IMR-90 (cell line): ENCODE measurements at regions of chrX and their contacts with region 1.

Region 1: GRCh38 chrX:102863735-102864134 is 73.3 kb upstream of the RAB40AL start:
- DNase-seq: peak; percentile 74
- ATAC-seq: peak; percentile 100
- H3K4me3 ChIP-seq: no peak overlapping the region
- H3K27ac ChIP-seq: no peak overlapping the region
- H3K4me1 ChIP-seq: no peaks in the 10 kb centered on the region
- H3K27me3 ChIP-seq: no peaks in the 10 kb centered on the region
- CTCF ChIP-seq: peak; percentile 85
- POLR2A ChIP-seq: no peak
- RAD21 ChIP-seq: peak; percentile 83

Region 2: GRCh38 chrX:102129473-102129872 is 734.3 kb before region 1 on chrX:
- CTCF ChIA-PET with region 1: no interaction called
- POLR2A ChIA-PET with region 1: no interaction called
- dilution Hi-C with region 1: no loop called
- in situ Hi-C with region 1: no loop called
- intact Hi-C with region 1: loop called (anchors 1 kb)
- DNase-seq: peak; percentile 4
- ATAC-seq: no peak; the same call in 1 of the 2 replicates
- H3K4me3 ChIP-seq: no peak overlapping the region
- H3K27ac ChIP-seq: no peak overlapping the region
- H3K4me1 ChIP-seq: no peaks in the 10 kb centered on the region
- H3K27me3 ChIP-seq: peaks cover 5% of the 10 kb centered on the region
- CTCF ChIP-seq: peak; percentile 43
- POLR2A ChIP-seq: no peak
- RAD21 ChIP-seq: 0 out of 2 replicates have a peak, but pooled peaks have one; percentile 16

Region 3: DNA sequence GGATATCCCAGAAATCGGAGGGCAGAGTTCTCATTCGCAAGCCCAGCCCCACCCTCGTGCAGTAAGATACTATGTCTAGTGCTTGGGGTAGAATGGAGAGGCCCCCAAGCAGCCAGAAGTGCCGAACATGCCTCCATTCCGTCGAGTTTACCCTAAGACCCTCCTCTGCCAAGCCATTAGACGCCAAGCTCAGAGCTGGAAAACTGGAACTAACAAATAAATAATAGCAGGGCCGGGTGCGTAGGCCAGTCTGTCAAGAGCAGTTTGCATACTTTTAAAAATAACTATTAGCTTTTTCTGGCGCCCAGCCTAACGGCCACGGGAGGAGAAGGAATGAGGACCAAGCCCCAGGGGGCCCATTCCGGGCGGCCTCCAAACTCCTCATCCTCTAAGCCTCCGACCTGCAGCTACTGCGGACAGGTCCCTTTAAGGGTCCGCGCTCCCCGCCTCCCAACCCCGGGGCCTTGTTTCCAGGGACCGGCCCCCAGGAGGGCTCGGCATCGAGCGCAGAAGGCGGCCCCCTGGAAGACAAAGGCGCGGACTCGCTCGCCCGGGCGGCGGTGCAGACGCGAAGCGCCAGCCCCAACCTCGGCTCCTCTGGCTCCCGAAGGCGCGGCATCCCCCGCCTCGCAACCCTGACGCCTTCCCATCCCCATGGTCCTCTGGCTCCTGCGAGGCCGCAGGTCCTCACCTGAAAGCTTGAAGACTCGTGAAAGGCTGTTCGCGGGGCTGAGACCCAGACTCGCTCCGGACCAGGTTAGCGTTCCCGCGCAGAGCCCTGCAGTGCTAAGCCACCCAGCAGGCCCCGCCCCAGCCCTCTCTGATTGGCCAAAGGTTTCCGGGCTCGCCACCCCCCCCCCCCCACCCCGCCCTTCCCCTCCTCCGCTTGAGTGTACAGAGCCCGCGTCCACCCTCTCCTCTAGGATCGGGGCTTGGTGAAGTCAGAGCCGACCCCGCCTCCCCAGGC is 347.5 kb before region 1 on chrX and contains the start of gene TMSB15A:
- CTCF ChIA-PET with region 1: interaction called, 3 read pairs
- POLR2A ChIA-PET with region 1: no interaction called
- dilution Hi-C with region 1: no loop called
- in situ Hi-C with region 1: no loop called
- intact Hi-C with region 1: loop called (anchors 10 kb)
- DNase-seq: peak; percentile 28
- ATAC-seq: peak; percentile 97
- H3K4me3 ChIP-seq: peak within 1 kb of the TSS; percentile 66
- H3K27ac ChIP-seq: no peak within 1 kb of the TSS
- H3K4me1 ChIP-seq: no peaks in the 10 kb centered on the region
- H3K27me3 ChIP-seq: no peaks in the 10 kb centered on the region; the same call in 1 of the 2 replicates
- CTCF ChIP-seq: no peak
- POLR2A ChIP-seq: no peak
- RAD21 ChIP-seq: no peak
- total RNA-seq, gene TMSB15A: 13.6 and 32.8 TPM in 2 replicates

Region 4: DNA sequence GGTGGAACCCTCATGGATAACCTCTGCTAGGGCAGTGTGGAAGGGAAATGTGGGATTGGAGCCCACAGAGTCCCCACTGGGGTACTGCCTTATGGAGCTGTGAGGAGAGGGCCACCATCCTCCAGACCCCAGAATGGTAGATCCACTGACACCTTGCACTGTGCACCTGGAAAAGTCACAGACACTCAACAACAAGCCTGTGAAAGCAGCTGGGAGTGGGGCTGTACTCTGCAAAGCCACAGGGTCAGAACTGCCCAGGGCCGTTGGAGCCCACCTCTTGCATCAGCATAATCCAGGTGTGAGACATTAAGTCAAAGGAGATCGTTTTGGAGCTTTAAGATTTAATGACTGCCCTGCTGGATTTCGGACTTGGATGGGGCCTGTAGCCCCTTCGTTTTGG is 252.8 kb before region 1 on chrX:
- CTCF ChIA-PET with region 1: no interaction called
- POLR2A ChIA-PET with region 1: no interaction called
- dilution Hi-C with region 1: no loop called
- in situ Hi-C with region 1: no loop called
- intact Hi-C with region 1: no loop called
- DNase-seq: no peak
- ATAC-seq: no peak
- H3K4me3 ChIP-seq: no peak overlapping the region
- H3K27ac ChIP-seq: no peak overlapping the region
- H3K4me1 ChIP-seq: no peaks in the 10 kb centered on the region
- H3K27me3 ChIP-seq: no peaks in the 10 kb centered on the region
- CTCF ChIP-seq: no peak
- POLR2A ChIP-seq: no peak
- RAD21 ChIP-seq: no peak

Region 5: GRCh38 chrX:102624105-102624504 is 239.6 kb before region 1 on chrX:
- CTCF ChIA-PET with region 1: no interaction called
- POLR2A ChIA-PET with region 1: no interaction called
- dilution Hi-C with region 1: no loop called
- in situ Hi-C with region 1: no loop called
- intact Hi-C with region 1: no loop called
- DNase-seq: no peak
- ATAC-seq: no peak
- H3K4me3 ChIP-seq: no peak overlapping the region
- H3K27ac ChIP-seq: no peak overlapping the region
- H3K4me1 ChIP-seq: peaks cover 3% of the 10 kb centered on the region; the same call in 1 of the 2 replicates
- H3K27me3 ChIP-seq: no peaks in the 10 kb centered on the region; the same call in 1 of the 2 replicates
- CTCF ChIP-seq: no peak
- POLR2A ChIP-seq: no peak
- RAD21 ChIP-seq: no peak

Region 6: DNA sequence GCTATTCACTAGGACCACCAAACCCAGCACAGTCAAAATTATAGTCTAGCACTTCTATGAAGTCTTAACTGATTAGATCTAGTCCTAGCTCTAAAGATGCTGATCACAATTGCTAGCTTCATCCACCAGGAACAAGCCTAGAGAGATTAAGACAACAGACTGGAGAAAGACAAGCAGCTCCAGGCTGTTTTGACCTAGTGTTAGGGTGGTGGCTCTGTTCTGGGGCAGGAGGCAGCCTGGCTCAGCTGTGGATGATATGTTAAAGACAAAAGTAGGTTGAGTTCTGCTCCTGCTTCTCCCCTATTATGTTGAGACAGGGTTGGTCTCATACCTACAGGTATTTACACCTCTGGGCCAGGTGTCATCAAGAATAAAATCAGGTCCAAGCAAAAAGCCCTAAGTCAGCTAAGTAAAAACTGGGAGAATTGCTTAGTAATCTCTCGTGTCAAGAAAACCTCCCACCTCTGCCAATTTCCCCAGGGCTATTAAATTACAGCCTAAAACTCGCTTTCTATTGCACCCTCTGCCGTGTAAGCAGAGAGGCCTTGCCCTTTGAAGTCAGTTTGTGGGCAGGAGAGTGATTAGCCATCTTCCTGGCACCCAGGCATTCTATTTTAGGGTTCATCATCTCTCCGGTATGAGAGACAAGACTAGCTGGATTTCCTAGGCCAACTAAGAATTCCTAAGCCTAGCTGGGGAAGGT is 113.2 kb after region 1 on chrX:
- CTCF ChIA-PET with region 1: no interaction called
- POLR2A ChIA-PET with region 1: no interaction called
- dilution Hi-C with region 1: no loop called
- in situ Hi-C with region 1: no loop called
- intact Hi-C with region 1: no loop called
- DNase-seq: peak; percentile 35
- ATAC-seq: no peak
- H3K4me3 ChIP-seq: no peak overlapping the region
- H3K27ac ChIP-seq: no peak overlapping the region
- H3K4me1 ChIP-seq: no peaks in the 10 kb centered on the region
- H3K27me3 ChIP-seq: peaks cover 9% of the 10 kb centered on the region; the same call in 1 of the 2 replicates
- CTCF ChIP-seq: no peak
- POLR2A ChIP-seq: no peak
- RAD21 ChIP-seq: no peak